Heart left ventricle (tissue), 16 donors: ENCODE measurements at regions of chr9 and their contacts with region 1.

Region 1: DNA sequence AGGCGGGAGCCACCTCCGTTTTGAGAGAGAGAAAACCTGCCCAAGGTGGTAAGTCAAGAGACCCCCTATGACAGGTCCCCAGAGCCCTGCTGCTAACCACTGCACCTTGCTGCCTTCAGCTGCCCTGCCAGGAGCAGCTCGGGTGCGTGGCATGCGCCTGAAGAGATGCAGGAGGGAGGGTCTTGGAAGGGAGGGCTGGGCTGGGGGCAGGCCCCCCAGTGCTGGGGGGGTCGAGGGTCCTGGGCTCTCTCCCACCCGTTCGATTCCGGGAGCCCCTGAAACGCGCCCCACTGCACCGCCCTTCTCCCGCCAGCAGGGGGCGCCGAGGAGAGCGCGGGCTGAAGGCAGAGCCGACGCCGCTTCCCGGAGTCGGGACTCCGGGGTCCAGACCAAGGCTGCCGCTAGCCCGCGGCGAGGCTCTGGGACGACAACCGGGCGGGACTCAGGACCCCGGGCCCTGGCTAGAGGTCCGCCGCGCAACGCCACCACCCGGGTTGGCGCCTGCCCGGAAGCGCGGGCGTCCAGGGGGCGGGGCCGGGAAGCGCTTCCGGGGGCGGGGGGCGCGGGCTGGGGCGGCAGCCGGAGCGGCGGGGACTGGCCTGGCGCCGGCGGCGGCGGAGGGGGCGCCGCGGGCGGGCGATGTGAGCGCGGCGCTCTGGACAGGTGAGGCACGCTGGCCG is at the start of gene ZBTB34:
- DNase-seq: peak; percentile 65 to 85 (median 71)
- ATAC-seq: peak; percentile 34 to 85 (median 76)
- H3K4me3 ChIP-seq: peak within 1 kb of the TSS; percentile 87 to 99 (median 94)
- H3K27ac ChIP-seq: peak within 1 kb of the TSS; percentile 70 to 98 (median 96)
- H3K4me1 ChIP-seq: peaks cover 0 to 39% (median 28%) of the 10 kb centered on the region in 12 donors
- H3K27me3 ChIP-seq: no peaks in the 10 kb centered on the region
- CTCF ChIP-seq: peak in 11 of 12 donors; percentile 99 to 100 (median 100)
- POLR2A ChIP-seq: peak in 1 of 2 donors; percentile 50
- total RNA-seq, gene ZBTB34: 3.7 to 8.2 (median 5.2) TPM

Region 2: DNA sequence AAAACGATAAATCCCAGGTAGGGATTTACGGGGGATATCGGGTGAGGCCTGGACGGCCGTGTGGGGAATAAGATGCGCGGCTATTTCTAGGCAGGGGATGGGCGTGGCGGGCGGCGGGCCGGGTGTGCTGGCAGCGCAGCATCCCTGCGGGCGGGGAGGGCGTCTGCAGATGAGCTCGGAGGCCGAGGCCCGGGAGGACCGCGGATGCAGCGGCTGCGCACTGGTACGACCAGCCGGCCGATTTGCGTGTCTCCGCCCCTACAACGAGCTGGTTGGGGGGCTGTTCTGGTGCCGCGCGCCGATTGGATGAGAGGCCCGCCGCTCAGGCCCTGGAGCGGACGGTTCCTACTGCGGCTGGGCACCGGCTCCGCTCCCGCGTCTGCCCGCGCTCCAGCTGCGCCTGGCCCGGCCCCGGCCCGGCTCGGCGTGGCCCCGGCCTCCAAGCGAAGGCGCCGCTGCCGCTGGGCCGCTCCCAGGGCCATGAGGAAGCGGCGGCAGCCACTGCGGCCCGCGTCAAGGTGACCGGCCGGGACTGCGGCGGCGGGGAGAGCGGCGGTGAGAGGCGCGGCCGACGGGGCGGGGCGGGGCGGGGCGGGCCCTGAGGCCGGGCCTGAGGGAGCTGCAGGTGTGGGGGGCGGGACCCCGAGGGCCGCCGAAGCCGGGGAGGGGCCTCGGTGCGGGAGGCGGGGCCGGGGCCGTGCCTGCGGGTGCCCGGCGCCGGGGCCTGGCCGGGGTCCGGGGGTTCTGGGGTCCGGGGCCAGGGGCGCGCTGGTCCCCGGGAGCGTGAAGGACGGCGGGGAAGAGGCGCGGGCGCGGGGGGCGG is 54.5 kb after region 1 on chr9 and contains the start of gene RALGPS1:
- intact Hi-C with region 1: loop called in 2 of 10 experiments (anchors 2 kb)
- DNase-seq: peak; percentile 97 to 98 (median 98)
- ATAC-seq: peak; percentile 99 to 100 (median 100)
- H3K4me3 ChIP-seq: peak within 1 kb of the TSS in 11 of 12 donors; percentile 25 to 88 (median 63)
- H3K27ac ChIP-seq: peak within 1 kb of the TSS in 11 of 12 donors; percentile 46 to 85 (median 80)
- H3K4me1 ChIP-seq: peaks cover 0 to 12% (median 7%) of the 10 kb centered on the region in 12 donors
- H3K27me3 ChIP-seq: no peaks in the 10 kb centered on the region
- CTCF ChIP-seq: no peak
- POLR2A ChIP-seq: peak in 1 of 2 donors; percentile 70
- total RNA-seq, gene RALGPS1: 9.7 to 21.8 (median 14.4) TPM